ENCODE measurements at regions of chr4 and their contacts with region 1.

Region 1: DNA sequence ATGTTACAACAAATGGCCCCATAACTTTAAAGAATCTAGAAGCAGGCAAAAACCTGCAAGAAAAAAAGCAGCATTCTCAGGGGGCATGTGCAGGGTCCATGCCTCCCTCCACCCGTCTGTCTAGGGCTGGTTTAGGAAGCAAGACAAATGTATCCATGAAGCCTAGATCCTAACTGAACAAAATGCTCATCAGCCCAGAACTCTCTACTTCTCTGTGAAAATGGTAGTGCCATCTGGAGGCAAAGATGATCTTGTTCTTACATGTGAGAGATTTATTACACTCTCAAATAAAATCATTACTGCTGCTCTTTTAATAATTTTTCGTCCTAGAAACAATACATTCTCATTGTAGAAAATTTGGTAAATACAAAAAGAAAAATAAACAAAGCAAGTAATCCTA is 26.7 kb downstream of the NR3C2 start:
- DNase-seq: no peak
- H3K4me3 Mint-ChIP-seq: no peak overlapping the region
- H3K27ac Mint-ChIP-seq: no peak overlapping the region
- H3K4me1 Mint-ChIP-seq: peaks cover 60% of the 10 kb centered on the region
- H3K27me3 Mint-ChIP-seq: no peaks in the 10 kb centered on the region

Region 2: DNA sequence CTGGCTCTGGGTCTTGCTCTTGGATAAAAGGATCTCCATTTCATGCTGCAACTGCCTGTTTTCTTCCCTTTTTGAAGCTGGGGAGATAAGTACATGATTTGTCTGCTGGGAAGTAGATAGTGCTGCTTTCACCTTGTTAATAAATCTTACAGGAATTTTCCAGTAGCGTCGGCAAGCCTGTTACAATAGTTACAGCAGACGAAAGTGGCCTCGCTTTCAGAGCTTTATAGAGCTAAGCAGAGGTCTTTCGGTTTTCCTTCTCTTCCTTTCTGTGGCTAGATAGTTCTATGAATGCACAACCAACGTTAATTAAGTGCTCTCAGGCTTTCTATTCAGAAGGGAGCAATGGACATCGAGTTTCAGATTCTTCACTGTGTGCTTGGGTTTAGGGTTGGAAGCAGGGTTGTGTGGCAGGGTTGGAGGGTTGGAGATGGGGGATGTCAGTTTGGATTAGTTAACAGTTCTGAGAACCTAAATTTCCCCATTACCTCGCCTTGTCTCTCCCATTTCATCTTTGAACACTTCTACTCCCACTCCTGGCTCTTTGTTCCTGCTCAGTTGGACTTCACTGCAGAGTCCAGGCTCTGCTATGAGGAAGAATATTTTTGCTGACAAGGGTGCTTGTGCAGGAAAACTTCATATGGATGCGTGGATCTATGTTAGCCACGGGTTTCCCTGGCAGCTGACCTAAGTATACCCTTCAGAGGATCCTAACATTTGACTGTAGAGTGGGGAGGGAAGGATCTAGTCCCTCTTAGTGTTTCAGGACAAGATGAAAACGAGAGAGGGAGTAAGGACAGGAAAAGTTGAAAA is 445.7 kb before region 1 on chr4:
- CTCF ChIA-PET with region 1: no interaction called
- intact Hi-C with region 1: no loop called
- DNase-seq: no peak
- H3K4me3 Mint-ChIP-seq: no peak overlapping the region
- H3K27ac Mint-ChIP-seq: no peak overlapping the region
- H3K4me1 Mint-ChIP-seq: no peaks in the 10 kb centered on the region
- H3K27me3 Mint-ChIP-seq: no peaks in the 10 kb centered on the region

Region 3: GRCh38 chr4:148216866-148217814 is 198.4 kb before region 1 on chr4:
- CTCF ChIA-PET with region 1: no interaction called
- intact Hi-C with region 1: loop called (anchors 5 kb)
- DNase-seq: peak; percentile 25
- H3K4me3 Mint-ChIP-seq: peak overlapping the region; percentile 63
- H3K27ac Mint-ChIP-seq: peak overlapping the region; percentile 15
- H3K4me1 Mint-ChIP-seq: peaks cover 25% of the 10 kb centered on the region
- H3K27me3 Mint-ChIP-seq: no peaks in the 10 kb centered on the region

Region 4: GRCh38 chr4:148283665-148284064 is 131.8 kb before region 1 on chr4:
- CTCF ChIA-PET with region 1: no interaction called
- intact Hi-C with region 1: loop called (anchors 1 kb)
- DNase-seq: no peak
- H3K4me3 Mint-ChIP-seq: no peak overlapping the region
- H3K27ac Mint-ChIP-seq: no peak overlapping the region
- H3K4me1 Mint-ChIP-seq: peaks cover 23% of the 10 kb centered on the region
- H3K27me3 Mint-ChIP-seq: no peaks in the 10 kb centered on the region